ACHN (cell line): ENCODE measurements at regions of chr1 and their contacts with region 1.

Region 1: DNA sequence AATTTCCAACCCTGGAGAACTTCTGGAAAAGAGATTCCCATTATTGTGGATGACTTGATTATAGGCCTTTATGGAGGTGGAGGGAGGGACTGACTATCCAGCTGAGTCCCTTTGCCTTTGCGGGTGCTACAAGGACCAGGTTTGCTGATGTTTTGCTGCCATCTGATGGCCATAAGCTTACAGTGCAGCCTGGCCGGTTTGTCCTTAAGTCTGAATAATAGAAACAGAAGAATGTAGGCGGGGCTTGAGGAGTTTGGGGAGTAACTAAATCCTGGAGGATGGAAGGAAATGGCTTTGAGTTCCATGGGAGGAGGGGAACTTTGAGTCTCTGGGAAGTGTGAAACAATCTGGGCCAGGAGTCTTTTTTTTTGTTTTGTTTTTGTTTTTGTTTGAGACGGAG is 55.7 kb upstream of the CD1D start:
- DNase-seq: peak; percentile 95

Region 2: DNA sequence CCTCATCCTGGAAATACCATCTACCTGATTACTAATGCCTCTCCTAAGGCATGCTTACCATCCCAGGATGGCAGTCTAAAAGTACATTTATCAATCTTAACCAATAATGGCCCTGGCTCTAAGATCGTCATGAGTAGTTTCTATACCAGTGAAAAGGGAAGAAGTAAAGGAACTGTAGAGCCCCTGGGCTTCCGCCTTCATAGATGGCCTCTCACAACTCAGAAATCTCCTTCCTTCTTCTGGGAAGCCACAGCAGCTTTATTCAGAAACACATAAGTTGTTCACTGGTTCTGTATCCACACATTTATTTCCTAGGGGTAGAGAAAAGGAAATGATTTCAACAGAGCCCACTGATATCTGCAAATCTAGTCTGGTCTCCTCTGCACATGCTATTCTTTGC is 242.4 kb before region 1 on chr1:
- in situ Hi-C with region 1: no loop called
- DNase-seq: no peak

Region 3: DNA sequence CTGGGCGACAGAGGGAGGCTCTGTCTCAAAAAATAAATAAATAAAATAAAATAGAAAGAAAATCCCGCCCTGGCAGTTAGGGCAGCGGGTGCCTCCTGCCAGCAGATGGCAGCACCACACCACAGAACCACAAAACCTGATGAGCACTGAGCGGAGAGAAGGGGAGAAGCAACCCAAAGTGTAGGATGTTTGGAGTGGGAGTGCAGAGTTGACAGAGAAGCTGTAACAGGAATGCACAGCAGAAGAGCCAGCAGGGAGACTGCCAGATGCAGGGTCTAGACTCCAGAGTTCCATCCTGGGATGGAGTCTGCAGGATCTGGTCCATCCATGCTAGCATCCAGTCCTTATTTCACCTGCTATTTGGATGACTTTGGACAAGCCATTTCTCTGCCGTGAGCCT is 161.3 kb before region 1 on chr1:
- in situ Hi-C with region 1: loop called (anchors 25 kb)
- DNase-seq: peak; percentile 86

Region 4: DNA sequence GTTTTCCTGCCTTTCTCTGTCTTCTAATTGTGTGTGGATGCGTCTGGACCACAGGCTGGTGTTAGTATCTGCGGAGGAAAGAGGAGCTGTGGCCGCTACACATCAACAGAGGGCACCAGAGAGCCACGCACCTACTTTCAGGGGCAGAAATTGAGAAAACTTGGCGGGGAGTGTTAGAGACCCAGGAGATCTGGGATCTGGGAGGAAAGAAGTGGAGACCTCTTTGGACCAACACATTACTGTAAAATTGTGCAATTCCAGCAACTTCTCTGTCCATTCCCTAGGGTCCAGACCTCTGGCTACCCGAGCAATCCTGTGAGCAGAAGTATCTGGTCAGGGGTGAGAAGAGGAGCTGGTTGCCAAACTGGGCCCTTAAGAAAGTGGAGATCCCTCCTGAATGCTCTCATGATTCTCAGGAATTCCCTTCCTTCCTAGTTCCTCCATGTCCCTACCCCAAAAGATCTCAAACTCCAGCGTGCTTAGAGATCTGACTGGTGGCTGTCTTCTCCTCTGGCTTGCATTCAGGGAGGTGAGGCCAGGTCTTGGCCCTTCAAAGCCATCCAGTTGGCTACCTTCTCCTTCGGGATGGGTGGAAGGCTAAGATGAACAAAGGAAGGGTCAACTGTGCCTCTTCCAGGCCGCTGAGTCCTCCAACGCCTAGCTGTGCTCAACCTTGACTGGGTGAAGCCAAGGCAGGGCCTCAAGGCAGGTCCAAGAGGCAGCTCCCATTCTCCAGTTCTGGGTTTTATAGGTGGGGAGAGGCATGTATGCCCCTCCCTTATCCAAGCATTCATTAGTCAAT is 132.8 kb before region 1 on chr1:
- in situ Hi-C with region 1: no loop called
- DNase-seq: peak; percentile 72